Breast epithelium (tissue), 4 donors: ENCODE measurements at regions of chr22 and their contacts with region 1.

Region 1: DNA sequence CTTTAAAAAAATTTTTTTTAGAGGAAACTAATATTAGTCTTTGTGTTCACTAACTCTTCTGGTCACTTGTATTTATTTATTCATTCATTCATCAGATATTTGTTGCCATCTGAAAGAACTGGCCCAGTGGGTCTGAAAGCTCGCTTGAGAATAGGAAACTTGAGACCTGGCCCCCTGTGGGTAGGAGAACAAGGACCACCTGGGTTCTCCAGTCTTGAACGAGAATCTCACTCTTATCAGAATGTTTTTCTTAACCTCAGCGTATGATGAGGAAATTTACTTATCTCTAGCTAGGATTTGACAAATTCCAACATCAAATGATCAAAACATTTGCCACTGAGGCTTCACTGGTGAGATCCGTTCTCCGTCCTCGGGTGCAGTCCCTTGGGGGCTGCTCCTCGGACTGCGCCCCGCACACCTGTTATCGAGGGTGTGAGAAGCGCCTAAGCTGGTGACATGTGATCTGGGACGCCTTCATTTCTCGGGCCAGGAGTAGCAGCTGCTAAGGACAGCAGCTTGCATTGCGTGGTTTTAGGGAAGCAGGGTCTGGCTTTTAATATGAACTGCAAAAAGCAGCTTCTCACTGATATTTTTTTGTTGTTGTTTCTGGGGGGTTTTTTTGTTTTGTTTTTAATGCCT is 6.3 kb downstream of the C22orf31 start:
- DNase-seq: no peak
- H3K4me3 ChIP-seq: no peak overlapping the region
- H3K27ac ChIP-seq: no peak overlapping the region
- H3K4me1 ChIP-seq: no peaks in the 10 kb centered on the region
- H3K27me3 ChIP-seq: no peaks in the 10 kb centered on the region
- CTCF ChIP-seq: no peak
- POLR2A ChIP-seq: no peak

Region 2: DNA sequence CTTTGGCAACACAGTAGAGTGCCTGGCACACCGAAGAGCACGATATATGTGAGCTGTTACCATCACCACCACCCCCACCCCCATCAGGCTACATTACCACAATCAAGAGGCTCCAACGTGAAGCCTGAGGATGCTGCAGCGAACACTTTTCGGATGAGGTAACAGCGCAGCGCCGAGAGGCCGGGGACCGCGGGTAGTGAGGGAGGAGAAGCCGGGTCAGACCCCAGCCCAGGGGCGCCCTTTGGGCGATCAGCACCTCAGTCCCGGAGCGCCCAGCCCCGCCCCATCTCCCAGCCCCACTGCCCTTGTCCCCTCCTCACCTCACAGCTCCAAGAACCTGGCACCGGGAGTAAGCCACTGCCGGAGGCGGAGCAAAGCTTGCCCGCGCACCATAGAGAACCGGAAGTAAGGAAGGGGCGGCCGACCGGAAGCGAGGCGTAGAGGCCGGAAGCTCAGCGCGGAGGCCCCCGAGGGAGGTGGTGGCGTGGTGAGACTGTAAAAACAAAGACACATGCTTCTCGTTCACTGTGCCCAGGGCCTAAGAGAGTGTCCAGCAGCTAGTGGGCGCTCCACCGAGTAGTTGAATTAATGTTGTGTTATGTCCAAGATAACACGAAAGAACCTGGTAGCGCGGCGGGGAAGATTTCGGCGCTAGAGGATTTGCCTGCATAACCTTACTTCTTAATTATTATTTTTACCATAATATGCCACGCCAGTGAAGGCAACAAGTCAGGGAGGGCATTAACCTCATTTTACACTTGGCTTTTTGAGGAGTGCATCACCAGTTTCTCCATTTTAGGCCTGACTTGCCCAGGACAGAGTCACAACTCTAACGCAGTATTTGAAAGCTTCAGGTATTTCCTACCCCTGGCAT is 498.3 kb after region 1 on chr22 and contains the start of gene THOC5:
- intact Hi-C with region 1: loop called (anchors 5 kb)
- DNase-seq: peak; percentile 94
- H3K4me3 ChIP-seq: peak within 1 kb of the TSS; percentile 71 to 83 (median 81)
- H3K27ac ChIP-seq: peak within 1 kb of the TSS; percentile 85
- H3K4me1 ChIP-seq: peaks cover 0 to 6% of the 10 kb centered on the region in 2 donors
- H3K27me3 ChIP-seq: no peaks in the 10 kb centered on the region
- CTCF ChIP-seq: peak in 2 of 3 donors; percentile 27 to 31
- POLR2A ChIP-seq: peak; percentile 33
- total RNA-seq, gene THOC5: 33.2 to 55.4 (median 48.0) TPM